Activated naive CD4-positive, alpha-beta T cell treated with anti-CD3 and anti-CD28 coated beads for 36 hours (primary cell): ENCODE measurements at regions of chr1 and their contacts with region 1.

Region 1: DNA sequence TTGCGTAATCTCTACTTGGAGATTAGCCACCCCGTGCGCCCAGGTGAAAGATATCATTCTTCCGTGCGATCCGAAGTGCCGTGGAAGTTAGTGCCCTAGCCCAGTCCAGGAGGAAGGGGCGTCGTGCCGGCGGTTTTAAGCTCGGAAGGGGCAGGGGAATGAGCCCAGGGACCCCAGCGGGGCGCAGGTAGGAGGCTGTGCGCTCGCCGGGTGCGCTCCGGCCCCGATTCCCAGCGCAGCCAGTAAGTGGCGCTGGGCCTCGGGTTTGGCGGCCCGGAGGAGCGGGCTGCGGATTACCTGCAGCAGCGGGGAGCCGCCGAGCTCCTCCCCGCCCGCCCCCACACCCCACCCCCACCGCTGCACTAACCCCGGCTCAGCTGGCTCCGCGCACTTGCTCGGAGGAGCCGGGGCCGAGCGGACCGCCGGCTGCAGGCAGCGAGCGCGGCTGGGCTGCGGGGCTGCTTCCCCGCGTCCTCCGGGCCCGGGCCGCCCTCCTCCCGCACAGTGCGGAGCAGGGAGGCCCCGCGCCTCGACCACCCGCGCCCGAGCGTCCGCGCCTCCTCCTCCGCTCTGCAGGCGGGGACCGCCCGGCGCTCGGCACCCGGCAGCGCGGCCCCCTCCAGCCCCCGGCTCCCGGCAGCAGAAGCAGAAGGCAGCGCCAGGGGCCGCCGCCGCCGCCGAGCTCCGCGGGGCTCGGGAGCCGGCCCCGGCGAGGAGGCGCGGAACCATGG is at the start of gene RYR2:
- DNase-seq: peak; percentile 8
- H3K4me3 Mint-ChIP-seq: peak within 1 kb of the TSS; percentile 3
- H3K27ac Mint-ChIP-seq: no peak within 1 kb of the TSS
- H3K4me1 Mint-ChIP-seq: peaks cover 12% of the 10 kb centered on the region
- H3K27me3 Mint-ChIP-seq: peaks cover 47% of the 10 kb centered on the region
- total RNA-seq, gene RYR2: not detected

Region 2: GRCh38 chr1:237386362-237387143 is 344.6 kb after region 1 on chr1:
- CTCF ChIA-PET with region 1: no interaction called
- intact Hi-C with region 1: loop called (anchors 10 kb)
- DNase-seq: no peak
- H3K4me3 Mint-ChIP-seq: no peak overlapping the region
- H3K27ac Mint-ChIP-seq: no peak overlapping the region
- H3K4me1 Mint-ChIP-seq: no peaks in the 10 kb centered on the region
- H3K27me3 Mint-ChIP-seq: peaks cover 6% of the 10 kb centered on the region